BJ (cell line): ENCODE measurements at regions of chr4 and their contacts with region 1.

Region 1: DNA sequence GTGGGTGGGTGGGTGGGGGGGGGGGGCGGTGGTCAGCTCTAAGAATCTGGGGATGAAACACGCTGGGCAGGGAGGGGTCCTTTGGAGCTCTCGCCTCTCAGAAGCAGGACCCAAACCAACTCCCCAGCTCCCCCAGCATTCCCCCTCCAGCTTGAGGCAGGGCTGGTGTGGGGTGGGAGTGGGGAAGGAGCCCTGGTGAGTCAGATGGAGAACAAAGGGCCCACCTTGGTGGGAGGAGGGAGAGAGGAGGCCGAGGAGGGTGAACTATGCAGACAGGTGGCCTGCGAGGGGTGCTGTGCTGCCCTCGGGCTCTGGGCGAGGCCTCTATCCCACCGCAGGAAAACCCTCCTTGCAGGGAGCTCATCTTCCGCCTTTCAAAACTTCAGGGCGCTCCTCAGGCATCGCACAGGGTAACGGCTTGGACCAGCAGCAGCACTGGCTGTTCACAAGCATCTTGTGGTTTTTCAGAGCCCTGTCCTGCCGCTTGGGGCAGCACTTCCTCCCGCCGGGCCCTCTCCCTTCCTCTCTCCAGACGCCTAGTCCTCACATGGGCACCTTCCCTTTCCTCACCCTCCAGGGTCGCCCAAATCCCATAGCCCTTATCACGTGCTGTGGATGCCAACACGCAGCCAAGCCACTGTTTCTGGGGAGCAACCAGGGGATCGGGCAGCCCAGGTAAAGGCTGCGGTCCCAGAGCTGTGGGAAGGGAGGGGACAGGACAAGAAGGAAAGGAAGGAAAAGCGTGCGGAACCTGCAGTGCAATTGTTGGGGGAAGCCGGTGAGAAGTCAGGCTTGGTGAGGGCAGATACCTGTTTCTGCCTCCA is 34.0 kb upstream of the GRPEL1 start:
- DNase-seq: no peak
- H3K4me3 ChIP-seq: peak overlapping the region; percentile 28; the same call in 1 of the 2 replicates
- H3K27me3 ChIP-seq: peaks cover 2% of the 10 kb centered on the region
- CTCF ChIP-seq: peak; percentile 78

Region 2: DNA sequence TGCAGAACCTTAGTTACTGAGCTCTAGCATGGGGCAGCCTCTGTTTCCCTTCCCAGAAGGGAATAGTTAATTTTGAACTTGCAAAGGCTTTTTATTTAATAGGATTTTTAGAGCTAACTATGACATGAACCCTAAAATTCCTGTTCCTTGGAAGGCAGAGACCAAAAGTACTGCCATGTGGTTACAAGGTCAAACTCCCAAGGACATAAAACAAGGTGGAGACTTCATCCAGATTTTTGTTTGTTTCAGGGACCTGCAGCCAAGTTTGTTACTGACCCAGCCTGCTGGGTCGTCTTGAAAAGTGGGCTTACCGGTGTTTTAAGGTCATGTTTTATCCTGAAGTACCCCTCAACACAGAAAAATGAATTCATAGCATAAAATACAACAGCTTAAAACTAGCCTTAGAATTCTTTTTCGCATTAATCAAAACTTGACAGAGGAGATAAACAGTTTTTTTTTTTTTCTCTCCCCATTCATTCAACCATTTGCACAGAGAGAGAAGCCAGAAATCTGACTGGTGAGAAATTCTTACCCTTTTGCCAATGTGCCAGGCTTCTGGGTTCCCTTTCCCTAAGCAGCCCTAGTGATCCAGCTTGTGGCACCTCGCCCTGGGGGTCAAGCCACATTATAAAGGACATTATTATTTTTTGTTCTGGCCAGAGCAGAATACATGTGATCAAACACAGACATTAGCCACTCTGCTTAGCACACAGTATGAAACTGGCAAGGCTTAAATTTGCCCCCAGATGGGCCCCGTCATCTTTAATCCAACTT is 12.5 kb before region 1 on chr4:
- CTCF ChIA-PET with region 1: interaction called, 19 read pairs
- POLR2A ChIA-PET with region 1: no interaction called
- DNase-seq: no peak
- H3K4me3 ChIP-seq: no peak overlapping the region
- H3K27me3 ChIP-seq: peaks cover 8% of the 10 kb centered on the region
- CTCF ChIP-seq: no peak

Region 3: DNA sequence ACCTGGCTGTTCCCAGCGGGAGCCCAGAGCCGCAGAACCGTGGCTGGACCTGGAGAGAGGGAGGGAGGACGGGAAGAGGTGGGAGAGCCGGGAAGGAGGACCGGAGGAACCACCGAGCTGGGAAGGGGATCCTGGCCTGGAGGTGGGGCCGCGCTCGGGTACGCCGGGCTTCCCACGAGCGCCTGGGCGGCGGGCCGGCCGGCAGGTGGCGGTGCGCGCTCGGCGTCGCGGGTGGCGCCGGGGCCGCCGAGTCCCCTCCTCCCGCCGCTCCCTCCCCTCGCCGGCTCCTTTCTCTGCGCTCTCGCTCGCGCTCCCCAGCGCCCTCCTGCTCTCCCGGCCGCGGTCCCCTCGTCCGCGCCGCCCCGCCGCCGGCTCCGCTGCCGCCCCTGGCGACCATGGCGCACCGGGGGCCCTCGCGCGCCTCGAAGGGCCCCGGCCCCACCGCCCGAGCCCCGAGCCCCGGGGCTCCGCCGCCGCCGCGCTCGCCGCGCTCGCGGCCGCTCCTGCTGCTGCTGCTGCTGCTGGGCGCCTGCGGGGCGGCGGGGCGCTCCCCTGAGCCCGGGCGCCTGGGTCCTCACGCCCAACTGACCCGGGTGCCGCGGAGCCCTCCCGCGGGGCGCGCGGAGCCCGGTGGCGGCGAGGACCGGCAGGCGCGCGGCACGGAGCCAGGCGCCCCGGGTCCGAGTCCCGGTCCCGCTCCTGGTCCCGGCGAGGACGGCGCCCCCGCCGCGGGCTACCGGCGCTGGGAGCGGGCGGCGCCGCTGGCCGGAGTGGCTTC is 90.5 kb after region 1 on chr4 and contains the start of gene SORCS2:
- CTCF ChIA-PET with region 1: no interaction called
- POLR2A ChIA-PET with region 1: no interaction called
- DNase-seq: no peak
- H3K4me3 ChIP-seq: peak within 1 kb of the TSS; percentile 11; the same call in 1 of the 2 replicates
- H3K27me3 ChIP-seq: peaks cover 42% of the 10 kb centered on the region
- CTCF ChIP-seq: peak; percentile 35
- polyA plus RNA-seq, gene SORCS2: 0.59 and 0.63 TPM in 2 replicates